ENCODE measurements at regions of chr5 and their contacts with region 1.

Region 1: DNA sequence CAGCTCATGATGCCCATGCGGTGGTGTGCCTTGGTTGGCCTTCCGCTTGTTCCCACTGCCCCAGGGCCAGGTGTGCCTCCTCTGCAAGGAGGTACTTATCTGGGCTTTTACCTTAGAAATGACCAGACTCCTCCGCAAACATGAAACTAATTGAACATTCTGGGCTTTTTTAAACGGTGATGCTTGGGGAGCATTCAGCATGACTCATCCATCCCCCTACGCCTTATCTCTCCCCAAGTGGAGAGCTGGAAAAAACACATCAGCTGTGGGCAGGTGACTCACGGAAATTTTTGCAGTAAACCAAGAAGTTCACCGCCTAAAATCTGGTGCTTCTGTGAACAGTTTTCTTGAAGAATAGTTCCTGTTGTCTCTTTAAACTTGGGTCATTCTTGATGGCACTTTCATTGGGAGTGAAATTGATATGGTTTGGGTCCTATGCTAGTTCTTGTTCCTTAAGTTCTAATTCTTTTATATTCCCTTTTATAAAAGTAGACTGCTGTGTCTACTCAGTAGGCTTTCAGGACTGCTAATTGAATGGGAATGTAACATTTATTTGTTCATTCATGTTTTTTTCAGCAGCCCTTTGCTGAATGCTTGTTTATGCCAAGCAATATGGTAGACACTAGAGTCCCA is 39.6 kb downstream of the SFXN1 start:
- DNase-seq: peak; percentile 93
- ATAC-seq: peak; percentile 49
- H3K4me3 Mint-ChIP-seq: peak overlapping the region; percentile 59
- H3K27ac Mint-ChIP-seq: peak overlapping the region; percentile 99
- H3K4me1 Mint-ChIP-seq: peaks cover 87% of the 10 kb centered on the region
- H3K27me3 Mint-ChIP-seq: no peaks in the 10 kb centered on the region
- CTCF ChIP-seq: no peak

Region 2: DNA sequence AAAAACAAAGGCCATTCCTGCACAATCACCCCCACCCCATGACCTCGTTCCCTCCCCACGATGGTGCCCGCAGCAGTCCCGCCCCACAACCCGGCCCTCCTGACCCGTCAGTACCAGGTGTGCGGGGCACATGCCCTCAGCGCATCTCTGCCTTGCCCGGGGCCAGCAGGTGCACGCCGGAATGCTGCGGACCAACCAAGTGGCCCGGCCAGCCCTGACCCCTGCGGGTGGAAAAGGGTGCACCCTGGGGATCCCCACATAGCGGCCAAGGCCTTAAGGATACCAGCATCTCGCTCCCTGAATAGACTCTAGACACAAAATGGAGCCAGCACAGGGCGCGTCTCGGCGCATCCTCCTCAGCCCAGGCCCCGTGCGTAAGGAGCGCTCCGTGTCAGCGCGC is 33.6 kb before region 1 on chr5:
- CTCF ChIA-PET with region 1: interaction called, 6 read pairs
- POLR2A ChIA-PET with region 1: interaction called, 63 read pairs
- intact Hi-C with region 1: loop called (anchors 2 kb)
- DNase-seq: no peak
- ATAC-seq: no peak
- H3K4me3 Mint-ChIP-seq: no peak overlapping the region
- H3K27ac Mint-ChIP-seq: peak overlapping the region; percentile 85
- H3K4me1 Mint-ChIP-seq: peaks cover 81% of the 10 kb centered on the region
- H3K27me3 Mint-ChIP-seq: no peaks in the 10 kb centered on the region
- CTCF ChIP-seq: no peak

Region 3: DNA sequence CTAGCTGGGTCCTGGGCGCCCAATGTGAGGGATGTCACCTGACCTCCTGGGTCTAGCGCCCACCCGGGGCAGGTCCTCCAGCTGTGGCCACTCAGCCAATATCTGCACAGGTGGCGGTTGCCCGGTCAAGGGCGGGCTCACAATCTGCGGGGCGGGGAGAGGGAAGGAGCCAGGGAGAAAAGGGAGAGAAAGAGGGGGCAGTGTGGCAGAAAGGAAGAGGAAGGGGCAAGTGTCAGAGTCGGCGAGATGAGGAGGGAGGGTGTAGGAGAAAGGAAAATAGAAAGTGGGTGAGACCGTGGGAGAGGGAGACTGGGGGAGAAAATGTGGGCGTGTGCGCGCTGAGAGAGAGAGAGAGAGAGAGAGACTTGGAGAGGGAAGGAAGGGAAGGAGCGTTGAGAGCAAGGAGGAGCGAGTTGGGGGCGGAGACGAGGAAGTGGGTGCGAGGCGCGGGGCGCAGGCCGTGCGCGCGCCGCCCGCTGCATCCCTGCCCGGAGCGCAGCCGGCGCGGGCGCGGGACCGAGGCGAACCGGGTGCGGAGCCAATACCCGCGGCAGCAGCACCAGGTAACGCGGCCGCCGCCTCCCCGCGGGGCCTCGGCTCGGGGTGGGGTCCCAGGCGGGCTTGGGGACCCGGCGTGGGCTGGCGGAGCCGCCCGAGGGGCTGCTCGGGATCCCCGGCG is 139.8 kb after region 1 on chr5 and contains the start of gene HRH2:
- CTCF ChIA-PET with region 1: interaction called, 3 read pairs
- POLR2A ChIA-PET with region 1: interaction called, 12 read pairs
- intact Hi-C with region 1: loop called (anchors 5 kb)
- DNase-seq: peak; percentile 75
- ATAC-seq: peak; percentile 47
- H3K4me3 Mint-ChIP-seq: peak within 1 kb of the TSS; percentile 84
- H3K27ac Mint-ChIP-seq: peak within 1 kb of the TSS; percentile 84
- H3K4me1 Mint-ChIP-seq: peaks cover 72% of the 10 kb centered on the region
- H3K27me3 Mint-ChIP-seq: no peaks in the 10 kb centered on the region
- CTCF ChIP-seq: no peak
- total RNA-seq, gene HRH2: 23.2 to 24.5 TPM